Mammary epithelial cell (primary cell): ENCODE measurements at regions of chr10 and their contacts with region 1.

Region 1: GRCh38 chr10:132387764-132388210 is 9.2 kb upstream of the PWWP2B start:
- DNase-seq: no peak
- H3K4me3 ChIP-seq: no peak overlapping the region
- H3K27ac ChIP-seq: no peak overlapping the region
- H3K4me1 ChIP-seq: no peaks in the 10 kb centered on the region
- H3K27me3 ChIP-seq: no peaks in the 10 kb centered on the region
- CTCF ChIP-seq: peak; percentile 36 to 64

Region 2: DNA sequence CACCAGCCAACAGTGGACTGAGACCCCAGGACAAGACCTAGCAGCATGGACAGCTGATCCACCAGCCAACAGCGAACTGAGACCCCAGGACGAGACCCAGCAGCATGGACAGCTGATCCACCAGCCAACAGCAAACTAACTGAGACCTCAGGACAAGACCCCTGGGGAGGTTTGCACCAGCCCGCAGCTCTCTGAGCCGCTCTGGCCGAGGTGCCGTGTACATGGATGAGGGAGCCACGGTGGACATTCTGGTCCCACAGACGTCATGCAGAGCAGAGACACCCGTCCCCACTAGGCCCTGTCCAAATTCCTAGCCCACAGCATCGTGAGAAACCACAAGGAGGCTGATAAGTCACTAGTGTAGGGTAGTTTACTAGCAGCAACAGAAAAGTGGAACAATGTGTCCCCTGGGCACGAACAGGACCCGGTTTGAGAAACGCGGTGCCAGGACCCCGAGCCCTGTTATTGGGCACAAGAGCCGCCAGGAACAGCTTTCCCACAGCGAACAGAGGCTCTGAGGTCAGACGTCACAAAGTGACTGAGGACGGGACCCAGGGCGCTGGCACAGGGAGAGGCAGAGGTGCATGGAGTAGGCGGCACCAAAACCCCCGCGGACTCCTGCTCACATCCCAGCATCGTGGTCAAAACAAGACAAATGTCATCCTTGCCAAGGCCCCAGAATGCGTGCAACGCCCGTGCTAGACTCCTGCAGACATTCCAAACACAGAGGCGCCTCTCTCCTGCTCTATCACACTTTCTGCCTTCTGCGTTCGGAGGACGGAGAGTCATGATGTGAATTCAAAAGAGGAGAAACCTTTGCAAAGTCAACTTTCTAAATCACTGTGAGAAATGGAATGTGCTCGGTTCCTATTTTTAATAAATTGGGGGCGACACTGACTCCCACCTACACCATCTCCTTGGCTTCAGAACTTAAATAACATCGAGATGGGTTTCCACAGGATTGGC is 88.1 kb before region 1 on chr10:
- CTCF ChIA-PET with region 1: no interaction called
- dilution Hi-C with region 1: loop called (anchors 5 kb)
- in situ Hi-C with region 1: no loop called
- intact Hi-C with region 1: no loop called
- DNase-seq: no peak
- H3K4me3 ChIP-seq: no peak overlapping the region
- H3K27ac ChIP-seq: no peak overlapping the region
- H3K4me1 ChIP-seq: no peaks in the 10 kb centered on the region
- H3K27me3 ChIP-seq: no peaks in the 10 kb centered on the region
- CTCF ChIP-seq: no peak

Region 3: DNA sequence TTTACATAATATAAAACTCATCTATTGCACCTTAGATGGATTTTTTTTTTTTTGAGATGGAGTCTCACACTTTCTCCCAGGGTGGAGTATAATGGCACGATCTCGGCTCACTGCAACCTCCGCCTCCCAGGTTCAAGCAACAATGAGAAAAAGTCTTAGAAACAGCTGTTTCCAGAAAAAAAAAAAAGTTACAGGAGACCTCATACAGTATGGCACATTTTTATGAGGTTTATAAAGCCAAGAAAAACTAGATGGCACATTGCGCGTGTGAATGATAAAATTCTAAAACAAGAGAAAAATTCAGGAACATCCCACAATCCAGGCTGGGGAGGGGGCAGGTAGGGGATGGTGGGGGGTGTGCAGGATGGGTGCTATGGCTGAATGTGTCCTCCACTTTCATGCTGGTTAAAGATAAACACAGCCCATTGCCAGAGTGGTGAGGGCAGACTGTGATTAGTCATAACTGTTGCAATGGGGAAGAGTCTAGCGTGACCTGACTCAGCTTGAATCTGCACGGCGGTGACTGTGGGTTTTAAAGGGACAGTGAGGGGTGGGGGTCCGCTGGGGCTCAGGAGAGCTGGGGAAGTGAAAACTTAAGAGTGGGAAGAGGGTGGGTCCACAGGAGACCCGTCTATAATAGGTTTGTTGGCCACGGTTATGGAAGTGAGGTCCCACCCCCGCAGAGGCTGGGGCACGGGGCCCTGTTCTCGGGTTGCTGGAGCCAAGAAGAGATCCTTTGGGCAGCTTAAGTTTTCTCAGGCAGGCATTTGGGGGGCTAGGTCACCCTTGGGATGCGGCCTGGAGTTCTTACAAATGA is 67.7 kb before region 1 on chr10:
- CTCF ChIA-PET with region 1: no interaction called
- dilution Hi-C with region 1: no loop called
- in situ Hi-C with region 1: no loop called
- intact Hi-C with region 1: no loop called
- DNase-seq: peak; percentile 74
- H3K4me3 ChIP-seq: no peak overlapping the region
- H3K27ac ChIP-seq: no peak overlapping the region
- H3K4me1 ChIP-seq: peaks cover 12% of the 10 kb centered on the region
- H3K27me3 ChIP-seq: no peaks in the 10 kb centered on the region
- CTCF ChIP-seq: no peak

Region 4: GRCh38 chr10:132452631-132453469 is 65.1 kb after region 1 on chr10:
- CTCF ChIA-PET with region 1: no interaction called
- dilution Hi-C with region 1: no loop called
- in situ Hi-C with region 1: loop called in 1 of 2 experiments (anchors 5 kb)
- intact Hi-C with region 1: loop called (anchors 1 kb)
- DNase-seq: peak; percentile 79
- H3K4me3 ChIP-seq: peak overlapping the region in 1 of 3 experiments; percentile 16
- H3K27ac ChIP-seq: no peak overlapping the region
- H3K4me1 ChIP-seq: peaks cover 17% of the 10 kb centered on the region
- H3K27me3 ChIP-seq: no peaks in the 10 kb centered on the region
- CTCF ChIP-seq: peak; percentile 69 to 88

Region 5: DNA sequence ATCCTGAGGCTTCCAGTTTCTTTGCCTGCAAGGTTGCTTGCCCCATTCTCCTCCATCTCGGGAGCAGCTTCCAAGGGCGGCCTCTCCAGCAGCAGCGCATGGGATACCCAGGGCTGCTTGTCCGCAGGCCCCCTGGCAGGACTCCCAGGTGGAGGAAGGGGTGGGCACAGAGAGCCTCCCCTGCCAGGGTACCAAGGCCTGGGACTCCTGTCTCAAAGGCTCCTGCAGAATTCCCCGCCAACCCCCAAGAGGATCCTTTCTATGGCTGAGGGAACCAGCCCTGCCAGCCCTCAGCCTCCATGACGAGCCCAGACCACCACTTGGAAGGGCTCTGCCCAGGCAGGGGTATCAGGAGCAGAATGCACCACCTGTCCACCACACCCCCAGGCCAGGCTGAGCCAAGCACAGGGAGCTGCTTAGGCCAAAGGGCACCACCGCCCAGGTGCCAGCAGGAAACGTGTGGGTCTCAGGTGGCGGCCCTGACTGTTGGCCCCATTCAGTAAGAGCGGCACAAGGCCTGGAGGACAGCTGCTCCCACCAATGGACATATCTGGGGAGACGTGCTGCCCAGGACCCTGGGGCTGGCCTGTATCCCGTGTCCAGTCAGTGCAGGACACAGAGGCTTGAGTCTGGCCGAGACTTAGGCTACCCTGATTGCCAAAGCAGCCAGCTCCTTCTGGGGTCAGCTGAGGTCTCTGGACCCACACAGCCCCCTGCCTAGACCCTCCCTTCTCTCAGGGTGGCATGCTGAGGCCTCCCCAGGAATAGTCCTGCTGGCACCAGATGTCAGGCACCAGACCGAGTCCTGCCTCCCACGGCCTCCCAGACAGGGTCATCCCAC is 116.0 kb after region 1 on chr10:
- CTCF ChIA-PET with region 1: no interaction called
- dilution Hi-C with region 1: loop called (anchors 5 kb)
- in situ Hi-C with region 1: no loop called
- intact Hi-C with region 1: no loop called
- DNase-seq: no peak
- H3K4me3 ChIP-seq: no peak overlapping the region
- H3K27ac ChIP-seq: no peak overlapping the region
- H3K4me1 ChIP-seq: no peaks in the 10 kb centered on the region
- H3K27me3 ChIP-seq: no peaks in the 10 kb centered on the region
- CTCF ChIP-seq: no peak

Region 6: GRCh38 chr10:132536971-132537712 is 149.4 kb after region 1 on chr10:
- CTCF ChIA-PET with region 1: no interaction called
- dilution Hi-C with region 1: no loop called
- in situ Hi-C with region 1: no loop called
- intact Hi-C with region 1: loop called (anchors 5 kb)
- DNase-seq: peak; percentile 99
- H3K4me3 ChIP-seq: peak overlapping the region; percentile 45 to 83 (median 73)
- H3K27ac ChIP-seq: no peak overlapping the region
- H3K4me1 ChIP-seq: peaks cover 28% of the 10 kb centered on the region
- H3K27me3 ChIP-seq: no peaks in the 10 kb centered on the region
- CTCF ChIP-seq: no peak

Region 7: GRCh38 chr10:132637477-132638129 is 249.8 kb after region 1 on chr10:
- CTCF ChIA-PET with region 1: no interaction called
- dilution Hi-C with region 1: no loop called
- in situ Hi-C with region 1: no loop called
- intact Hi-C with region 1: loop called (anchors 5 kb)
- DNase-seq: peak; percentile 26
- H3K4me3 ChIP-seq: no peak overlapping the region
- H3K27ac ChIP-seq: no peak overlapping the region
- H3K4me1 ChIP-seq: no peaks in the 10 kb centered on the region
- H3K27me3 ChIP-seq: no peaks in the 10 kb centered on the region
- CTCF ChIP-seq: peak; percentile 70 to 87